Panc1 (cell line): ENCODE measurements at regions of chr4 and their contacts with region 1.

Region 1: GRCh38 chr4:127732613-127733328 is 2.6 kb downstream of the SLC25A31 start:
- DNase-seq: peak; percentile 13
- ATAC-seq: peak; percentile 81
- H3K4me3 ChIP-seq: no peak overlapping the region
- H3K27ac ChIP-seq: no peak overlapping the region
- H3K4me1 ChIP-seq: no peaks in the 10 kb centered on the region
- H3K27me3 ChIP-seq: no peaks in the 10 kb centered on the region
- CTCF ChIP-seq: peak; percentile 49; the same call in 1 of the 2 replicates

Region 2: DNA sequence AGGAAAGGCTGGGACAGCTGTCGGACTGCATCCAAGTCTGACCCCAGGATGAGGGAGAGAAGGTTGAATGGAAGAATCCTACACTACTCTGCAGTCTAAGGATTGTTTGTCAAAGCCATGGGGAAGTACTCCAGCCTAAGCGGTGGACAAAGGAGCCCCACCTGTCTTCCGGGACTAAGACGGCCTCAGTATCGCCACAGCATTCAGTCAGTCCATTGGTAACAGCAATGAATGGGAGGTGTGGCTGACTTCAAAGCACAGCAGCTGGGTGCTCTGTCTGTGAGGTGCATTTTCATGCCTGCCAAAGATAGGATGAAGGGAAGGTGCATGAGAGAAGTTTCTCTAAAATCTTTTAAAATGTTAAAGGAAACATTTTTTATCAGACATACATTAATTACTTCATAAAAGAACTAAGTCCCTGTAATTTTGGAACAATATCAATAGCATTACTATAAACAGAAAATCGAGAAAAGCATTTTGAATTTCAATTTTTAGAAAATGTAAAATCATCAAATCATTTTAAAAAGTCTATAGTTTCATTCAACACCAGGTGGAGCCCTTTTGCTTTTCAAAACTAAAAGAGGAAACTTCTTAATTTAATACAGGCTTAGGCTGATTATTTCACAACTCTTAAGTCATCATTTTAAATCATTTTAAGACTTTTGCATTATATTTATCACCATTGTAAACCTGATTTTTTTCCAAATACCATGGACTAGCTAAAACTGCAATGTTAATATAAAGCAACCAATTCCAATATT is 127.6 kb before region 1 on chr4:
- CTCF ChIA-PET with region 1: interaction called, 3 read pairs
- POLR2A ChIA-PET with region 1: no interaction called
- in situ Hi-C with region 1: no loop called
- intact Hi-C with region 1: loop called (anchors 1 kb)
- DNase-seq: no peak
- ATAC-seq: no peak
- H3K4me3 ChIP-seq: no peak overlapping the region
- H3K27ac ChIP-seq: no peak overlapping the region
- H3K4me1 ChIP-seq: no peaks in the 10 kb centered on the region
- H3K27me3 ChIP-seq: no peaks in the 10 kb centered on the region; the same call in 1 of the 2 replicates
- CTCF ChIP-seq: peak; percentile 23; the same call in 1 of the 2 replicates

Region 3: GRCh38 chr4:127698789-127699200 is 34.0 kb before region 1 on chr4:
- CTCF ChIA-PET with region 1: no interaction called
- POLR2A ChIA-PET with region 1: interaction called, 10 read pairs
- in situ Hi-C with region 1: no loop called
- intact Hi-C with region 1: no loop called
- DNase-seq: no peak
- ATAC-seq: no peak
- H3K4me3 ChIP-seq: no peak overlapping the region
- H3K27ac ChIP-seq: no peak overlapping the region
- H3K4me1 ChIP-seq: no peaks in the 10 kb centered on the region
- H3K27me3 ChIP-seq: no peaks in the 10 kb centered on the region
- CTCF ChIP-seq: no peak